ENCODE measurements at regions of chr15 and their contacts with region 1.

Region 1: GRCh38 chr15:91852741-91853510 is 582 bp upstream of the SLCO3A1 start:
- DNase-seq: peak; percentile 93
- H3K4me3 Mint-ChIP-seq: peak overlapping the region; percentile 87
- H3K27ac Mint-ChIP-seq: peak overlapping the region; percentile 85
- H3K4me1 Mint-ChIP-seq: peaks cover 53% of the 10 kb centered on the region
- H3K27me3 Mint-ChIP-seq: peaks cover 10% of the 10 kb centered on the region

Region 2: DNA sequence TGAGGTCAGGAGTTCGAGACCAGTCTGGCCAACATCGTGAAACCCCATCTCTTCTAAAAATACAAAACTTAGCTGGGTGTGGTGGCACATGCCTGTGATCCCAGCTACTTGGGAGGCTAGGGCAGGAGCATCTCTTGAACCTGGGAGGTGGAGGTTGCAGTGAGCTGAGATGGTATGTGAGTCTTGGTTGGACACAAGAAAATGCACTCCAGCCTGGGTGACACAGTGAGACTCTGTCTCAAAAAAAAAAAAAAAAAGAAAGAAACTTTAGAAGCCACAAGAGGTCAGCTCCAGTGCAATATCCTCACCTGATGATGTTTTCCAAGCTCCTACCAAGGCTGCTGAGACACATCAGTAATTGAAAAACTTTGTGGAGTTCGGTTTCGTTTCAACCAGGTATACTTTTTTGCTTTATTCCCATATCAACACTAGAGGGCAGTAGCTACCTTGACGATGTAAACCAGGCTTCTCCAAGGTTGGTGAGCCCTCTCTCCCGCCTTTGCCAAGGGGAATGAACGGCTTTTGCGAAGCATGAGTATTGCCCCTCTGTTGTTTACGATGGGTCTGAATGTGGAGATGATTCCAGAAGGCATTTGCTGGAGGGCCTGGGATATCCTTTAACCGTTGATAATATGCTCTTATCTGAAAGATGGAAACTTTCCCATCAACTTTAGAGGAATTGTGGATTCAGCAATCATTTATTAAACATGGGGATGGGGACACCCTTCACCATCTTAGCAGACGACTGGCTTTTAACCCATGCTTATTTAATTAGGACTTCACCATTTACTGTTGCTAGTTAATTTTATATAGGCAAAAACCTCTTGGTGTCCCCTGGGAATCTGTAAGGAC is 550.1 kb before region 1 on chr15:
- intact Hi-C with region 1: loop called (anchors 2 kb)
- DNase-seq: peak; percentile 78
- H3K4me3 Mint-ChIP-seq: no peak overlapping the region
- H3K27ac Mint-ChIP-seq: no peak overlapping the region
- H3K4me1 Mint-ChIP-seq: peaks cover 23% of the 10 kb centered on the region
- H3K27me3 Mint-ChIP-seq: peaks cover 63% of the 10 kb centered on the region

Region 3: GRCh38 chr15:91469632-91470567 is 383.0 kb before region 1 on chr15:
- intact Hi-C with region 1: loop called (anchors 2 kb)
- DNase-seq: peak; percentile 88
- H3K4me3 Mint-ChIP-seq: peak overlapping the region; percentile 69
- H3K27ac Mint-ChIP-seq: peak overlapping the region; percentile 84
- H3K4me1 Mint-ChIP-seq: peaks cover 44% of the 10 kb centered on the region
- H3K27me3 Mint-ChIP-seq: no peaks in the 10 kb centered on the region

Region 4: DNA sequence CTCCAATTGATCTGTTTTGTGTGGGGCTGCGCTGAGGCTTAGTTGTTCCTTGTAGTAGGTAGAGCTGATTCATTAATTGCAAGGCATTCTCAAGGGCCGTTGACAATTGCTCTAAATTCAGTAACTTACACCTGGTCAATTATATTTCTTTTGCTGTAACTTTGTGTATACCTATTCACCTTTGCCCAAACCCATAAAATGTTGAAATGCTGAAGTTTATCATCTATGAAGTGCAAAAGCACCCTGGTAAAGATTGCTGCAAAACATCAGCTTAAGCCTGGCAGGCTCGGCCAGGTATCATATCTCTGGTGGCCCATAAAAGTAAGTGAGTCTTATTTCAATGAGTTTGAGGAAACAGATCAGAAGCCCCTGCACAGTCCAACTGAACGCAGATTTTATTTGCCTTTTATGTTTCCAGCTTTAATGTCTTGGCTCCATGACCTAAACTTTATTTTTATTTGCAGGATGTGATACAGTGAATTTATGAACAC is 203.1 kb before region 1 on chr15:
- intact Hi-C with region 1: no loop called
- DNase-seq: no peak
- H3K4me3 Mint-ChIP-seq: no peak overlapping the region
- H3K27ac Mint-ChIP-seq: no peak overlapping the region
- H3K4me1 Mint-ChIP-seq: no peaks in the 10 kb centered on the region
- H3K27me3 Mint-ChIP-seq: peaks cover 13% of the 10 kb centered on the region

Region 5: DNA sequence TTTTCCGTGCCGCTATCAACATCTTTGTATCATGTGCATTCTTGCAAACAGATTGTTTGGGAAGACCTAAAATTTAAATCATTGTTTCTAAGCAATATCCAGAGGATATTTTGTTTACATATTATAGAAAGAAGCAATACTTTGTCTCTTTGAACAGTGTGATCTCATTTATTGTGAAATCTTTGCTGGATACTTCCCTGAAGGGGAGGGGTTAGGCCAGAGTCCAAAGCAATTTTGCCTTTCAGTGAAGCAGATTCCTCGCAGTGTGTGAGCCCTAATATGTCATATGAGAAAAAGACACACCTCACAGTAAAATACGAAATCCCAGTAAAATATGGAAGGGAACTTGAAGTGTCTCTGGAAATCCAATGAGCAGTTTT is 158.1 kb before region 1 on chr15:
- intact Hi-C with region 1: no loop called
- DNase-seq: no peak
- H3K4me3 Mint-ChIP-seq: no peak overlapping the region
- H3K27ac Mint-ChIP-seq: no peak overlapping the region
- H3K4me1 Mint-ChIP-seq: no peaks in the 10 kb centered on the region
- H3K27me3 Mint-ChIP-seq: peaks cover 9% of the 10 kb centered on the region

Region 6: GRCh38 chr15:91706322-91707032 is 146.4 kb before region 1 on chr15:
- intact Hi-C with region 1: loop called (anchors 2 kb)
- DNase-seq: peak; percentile 97
- H3K4me3 Mint-ChIP-seq: peak overlapping the region; percentile 11
- H3K27ac Mint-ChIP-seq: peak overlapping the region; percentile 67
- H3K4me1 Mint-ChIP-seq: peaks cover 17% of the 10 kb centered on the region
- H3K27me3 Mint-ChIP-seq: peaks cover 25% of the 10 kb centered on the region

Region 7: GRCh38 chr15:91874992-91875660 is 22.2 kb after region 1 on chr15:
- intact Hi-C with region 1: no loop called
- DNase-seq: no peak
- H3K4me3 Mint-ChIP-seq: no peak overlapping the region
- H3K27ac Mint-ChIP-seq: no peak overlapping the region
- H3K4me1 Mint-ChIP-seq: peaks cover 19% of the 10 kb centered on the region
- H3K27me3 Mint-ChIP-seq: peaks cover 5% of the 10 kb centered on the region

Region 8: DNA sequence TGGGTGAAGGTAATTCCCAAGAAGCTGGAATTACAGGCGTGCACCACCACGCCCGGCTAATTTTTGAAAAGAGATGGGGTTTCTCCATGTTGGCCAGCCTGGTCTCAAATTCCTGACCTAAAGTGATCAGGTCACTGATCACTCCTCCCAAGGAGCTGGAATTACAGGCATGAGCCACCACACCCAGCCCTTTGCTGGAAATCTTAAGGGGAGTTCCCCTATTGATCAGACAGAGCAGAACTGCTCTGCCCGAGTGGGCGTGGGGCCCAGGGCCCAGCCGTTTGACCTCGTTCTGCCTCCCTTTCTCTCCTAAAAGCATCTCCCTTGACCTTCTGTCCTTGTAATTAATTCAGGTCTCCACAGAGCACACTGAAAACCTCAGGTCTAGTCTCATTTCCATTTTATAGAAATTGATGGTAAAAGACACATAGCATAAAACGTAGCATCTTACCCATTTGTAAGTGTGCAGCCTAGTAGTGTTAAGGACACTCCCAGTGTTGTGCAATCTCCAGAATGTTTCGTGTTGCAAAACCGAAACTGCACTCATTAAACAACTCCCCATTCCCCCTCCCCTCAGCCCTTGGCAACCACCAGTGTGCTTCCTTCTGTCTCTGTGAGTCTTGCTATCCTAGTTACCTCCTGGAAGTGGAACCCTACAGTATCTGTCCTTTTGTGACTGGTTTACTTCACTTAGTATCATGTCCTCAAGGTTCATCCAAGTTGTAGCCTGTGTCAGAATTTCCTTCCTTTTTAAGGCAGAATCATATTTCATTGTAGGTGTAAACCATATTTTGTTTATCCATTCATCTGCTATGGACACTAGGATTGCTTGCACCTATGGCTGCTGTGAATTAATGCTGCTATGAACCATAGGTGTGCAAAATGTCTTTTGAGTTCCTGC is 90.0 kb after region 1 on chr15:
- intact Hi-C with region 1: loop called (anchors 2 kb)
- DNase-seq: peak; percentile 88
- H3K4me3 Mint-ChIP-seq: peak overlapping the region; percentile 75
- H3K27ac Mint-ChIP-seq: peak overlapping the region; percentile 85
- H3K4me1 Mint-ChIP-seq: peaks cover 38% of the 10 kb centered on the region
- H3K27me3 Mint-ChIP-seq: peaks cover 4% of the 10 kb centered on the region

Region 9: GRCh38 chr15:92011611-92012367 is 158.9 kb after region 1 on chr15:
- intact Hi-C with region 1: loop called (anchors 5 kb)
- DNase-seq: peak; percentile 73
- H3K4me3 Mint-ChIP-seq: peak overlapping the region; percentile 67
- H3K27ac Mint-ChIP-seq: peak overlapping the region; percentile 74
- H3K4me1 Mint-ChIP-seq: peaks cover 46% of the 10 kb centered on the region
- H3K27me3 Mint-ChIP-seq: no peaks in the 10 kb centered on the region

Region 10: GRCh38 chr15:92077353-92078085 is 224.6 kb after region 1 on chr15:
- intact Hi-C with region 1: loop called (anchors 2 kb)
- DNase-seq: peak; percentile 89
- H3K4me3 Mint-ChIP-seq: no peak overlapping the region
- H3K27ac Mint-ChIP-seq: no peak overlapping the region
- H3K4me1 Mint-ChIP-seq: peaks cover 18% of the 10 kb centered on the region
- H3K27me3 Mint-ChIP-seq: no peaks in the 10 kb centered on the region